ENCODE measurements at regions of chr16 and their contacts with region 1.

Region 1: DNA sequence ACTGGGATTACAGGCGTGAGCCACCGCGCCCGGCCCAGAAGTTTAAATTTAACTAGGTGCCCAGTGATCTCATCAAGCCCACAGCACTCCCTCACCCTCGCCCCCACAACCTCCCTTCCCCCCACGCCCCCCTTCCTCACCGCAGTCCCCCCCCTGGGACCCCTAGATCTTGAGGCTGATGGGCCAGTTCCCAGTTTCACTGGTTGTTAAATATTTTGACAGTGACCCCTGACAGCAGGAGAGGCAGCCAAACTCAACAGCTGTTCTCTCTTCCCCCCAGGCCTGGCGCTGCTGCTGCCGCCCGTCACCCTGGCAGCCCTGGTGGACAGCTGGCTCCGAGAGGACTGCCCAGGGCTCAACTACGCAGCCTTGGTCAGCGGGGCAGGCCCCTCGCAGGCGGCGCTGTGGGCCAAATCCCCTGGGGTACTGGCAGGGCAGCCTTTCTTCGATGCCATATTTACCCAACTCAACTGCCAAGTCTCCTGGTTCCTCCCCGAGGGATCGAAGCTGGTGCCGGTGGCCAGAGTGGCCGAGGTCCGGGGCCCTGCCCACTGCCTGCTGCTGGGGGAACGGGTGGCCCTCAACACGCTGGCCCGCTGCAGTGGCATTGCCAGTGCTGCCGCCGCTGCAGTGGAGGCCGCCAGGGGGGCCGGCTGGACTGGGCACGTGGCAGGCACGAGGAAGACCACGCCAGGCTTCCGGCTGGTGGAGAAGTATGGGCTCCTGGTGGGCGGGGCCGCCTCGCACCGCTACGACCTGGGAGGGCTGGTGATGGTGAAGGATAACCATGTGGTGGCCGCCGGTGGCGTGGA is 15.6 kb downstream of the QPRT start:
- DNase-seq: no peak
- H3K4me3 ChIP-seq: no peak overlapping the region
- H3K4me1 ChIP-seq: no peaks in the 10 kb centered on the region
- H3K27me3 ChIP-seq: no peaks in the 10 kb centered on the region

Region 2: DNA sequence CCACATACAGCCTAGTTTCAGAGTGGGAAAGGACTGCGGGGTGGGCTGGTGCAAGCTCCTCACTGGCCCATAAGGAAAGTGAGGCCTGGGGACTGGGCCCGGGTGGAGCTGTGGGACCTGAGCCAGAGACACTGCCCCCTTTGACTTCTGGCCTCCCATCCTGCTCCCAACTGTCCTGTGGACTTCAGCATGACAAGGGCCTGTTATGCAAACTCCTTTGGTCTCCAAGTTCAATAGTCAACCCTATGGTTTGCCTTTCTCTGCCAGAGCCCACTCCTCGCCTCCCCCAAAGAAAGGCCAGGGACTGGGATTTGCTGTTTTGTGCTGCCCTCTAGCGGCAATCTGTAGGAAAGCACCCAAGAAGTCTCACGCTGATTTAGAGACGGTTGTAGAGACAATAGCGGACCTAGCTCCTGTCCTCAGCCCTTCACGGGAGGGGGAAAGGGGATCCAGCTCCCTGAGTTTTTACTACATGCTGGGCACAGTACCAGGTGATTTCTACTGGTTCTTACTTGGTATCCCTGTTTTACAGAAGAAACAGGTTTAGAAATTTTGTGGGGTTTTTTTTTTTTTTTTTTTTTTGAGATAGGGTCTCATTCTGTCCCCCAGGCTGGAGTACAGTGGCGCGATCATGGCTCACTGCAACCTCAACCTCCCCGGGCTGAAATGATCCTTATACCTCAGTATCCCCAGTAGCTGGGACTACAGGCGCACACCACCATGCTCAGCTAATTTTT is 337.7 kb after region 1 on chr16:
- in situ Hi-C with region 1: loop called (anchors 10 kb)
- DNase-seq: peak; percentile 70 to 80
- H3K4me3 ChIP-seq: no peak overlapping the region
- H3K4me1 ChIP-seq: no peaks in the 10 kb centered on the region
- H3K27me3 ChIP-seq: peaks cover 35% of the 10 kb centered on the region